ENCODE measurements at regions of chr13 and their contacts with region 1.

Region 1: GRCh38 chr13:32443111-32443510 is 15.2 kb upstream of the N4BP2L1 start:
- DNase-seq: peak; percentile 39
- ATAC-seq: peak; percentile 66
- H3K4me3 ChIP-seq: no peak overlapping the region
- H3K27ac ChIP-seq: no peak overlapping the region
- H3K4me1 ChIP-seq: no peaks in the 10 kb centered on the region
- H3K27me3 ChIP-seq: no peaks in the 10 kb centered on the region
- CTCF ChIP-seq: peak; percentile 57

Region 2: GRCh38 chr13:32246468-32246867 is 196.6 kb before region 1 on chr13:
- CTCF ChIA-PET with region 1: no interaction called
- POLR2A ChIA-PET with region 1: no interaction called
- intact Hi-C with region 1: loop called (anchors 5 kb)
- DNase-seq: peak; percentile 74
- ATAC-seq: peak; percentile 93
- H3K4me3 ChIP-seq: no peak overlapping the region
- H3K27ac ChIP-seq: no peak overlapping the region
- H3K4me1 ChIP-seq: no peaks in the 10 kb centered on the region
- H3K27me3 ChIP-seq: no peaks in the 10 kb centered on the region
- CTCF ChIP-seq: peak; percentile 80

Region 3: GRCh38 chr13:32347651-32348050 is 95.5 kb before region 1 on chr13:
- CTCF ChIA-PET with region 1: no interaction called
- POLR2A ChIA-PET with region 1: no interaction called
- intact Hi-C with region 1: no loop called
- DNase-seq: no peak
- ATAC-seq: no peak
- H3K4me3 ChIP-seq: no peak overlapping the region
- H3K27ac ChIP-seq: no peak overlapping the region
- H3K4me1 ChIP-seq: no peaks in the 10 kb centered on the region
- H3K27me3 ChIP-seq: no peaks in the 10 kb centered on the region
- CTCF ChIP-seq: no peak

Region 4: DNA sequence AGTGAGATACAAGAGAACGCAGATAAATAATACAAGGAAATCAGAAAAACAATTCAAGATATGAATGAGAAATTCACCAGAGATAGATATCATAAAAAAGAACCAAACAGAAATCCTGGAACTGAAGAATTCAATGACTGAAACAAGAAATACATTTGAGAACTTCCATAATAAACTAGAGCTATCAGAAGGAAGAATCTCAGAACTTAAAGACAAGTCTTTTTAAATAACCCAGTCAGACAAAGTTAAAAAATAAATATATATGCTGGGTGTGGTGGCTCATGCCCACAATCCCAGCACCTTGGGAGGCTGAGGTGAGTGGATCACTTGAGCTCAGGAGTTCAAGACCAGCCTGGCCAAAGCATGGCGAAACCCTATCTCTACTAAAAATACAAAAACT is 13.5 kb after region 1 on chr13:
- CTCF ChIA-PET with region 1: no interaction called
- POLR2A ChIA-PET with region 1: no interaction called
- intact Hi-C with region 1: no loop called
- DNase-seq: no peak
- ATAC-seq: no peak
- H3K4me3 ChIP-seq: no peak overlapping the region
- H3K27ac ChIP-seq: no peak overlapping the region
- H3K4me1 ChIP-seq: no peaks in the 10 kb centered on the region
- H3K27me3 ChIP-seq: no peaks in the 10 kb centered on the region
- CTCF ChIP-seq: no peak